Prostate gland (tissue), 2 donors: ENCODE measurements at regions of chr11 and their contacts with region 1.

Region 1: DNA sequence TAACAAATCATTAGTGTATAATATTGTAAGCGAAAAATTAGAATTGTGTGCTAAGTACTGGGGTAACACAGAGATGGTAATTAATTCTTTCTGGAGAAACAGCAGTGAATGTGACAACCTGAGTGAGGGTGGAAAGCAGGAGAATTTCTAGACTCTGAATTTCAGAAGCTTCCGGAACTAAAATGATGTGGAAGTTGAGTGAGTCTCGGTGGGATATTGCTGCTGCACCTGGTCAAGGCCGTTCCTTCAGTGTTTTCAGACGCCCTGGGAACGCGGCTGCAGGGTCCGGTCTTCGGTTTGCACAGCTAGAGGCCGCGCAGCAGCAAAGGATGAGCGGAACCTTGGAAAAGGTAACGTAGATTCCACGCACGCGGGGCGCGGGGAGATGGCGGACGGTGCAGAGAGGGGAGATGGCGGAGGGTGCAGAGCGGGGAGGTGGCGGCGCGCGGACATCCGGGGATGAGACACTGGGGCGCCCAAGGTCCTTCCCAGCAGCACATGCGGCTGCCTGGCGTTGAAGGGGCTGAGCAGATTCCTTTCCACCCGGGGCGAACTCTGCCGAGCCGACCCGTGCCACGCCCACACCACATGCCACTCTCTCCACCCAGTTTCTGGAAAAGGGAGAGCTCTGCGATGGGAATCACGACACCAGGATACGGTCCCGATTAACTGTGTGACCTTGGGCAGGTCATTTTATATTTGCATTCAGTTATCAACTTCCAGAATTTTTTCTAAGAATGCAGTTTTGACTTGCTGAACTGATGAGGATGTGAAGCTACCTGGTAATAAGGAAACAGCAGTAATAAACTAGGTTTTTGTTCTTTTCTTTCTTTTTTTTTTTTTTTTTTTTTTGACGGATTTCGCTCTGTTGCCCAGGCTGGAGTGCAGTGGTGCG is at the start of gene MRPL48:
- DNase-seq: peak; percentile 83
- H3K4me3 ChIP-seq: peak within 1 kb of the TSS; percentile 61 to 68
- H3K27ac ChIP-seq: peak within 1 kb of the TSS; percentile 82 to 83
- H3K4me1 ChIP-seq: no peaks in the 10 kb centered on the region
- H3K27me3 ChIP-seq: no peaks in the 10 kb centered on the region
- CTCF ChIP-seq: peak in 1 of 4 experiments; percentile 20
- POLR2A ChIP-seq: peak; percentile 27
- total RNA-seq, gene MRPL48: 11.1 to 33.0 TPM

Region 2: GRCh38 chr11:73876424-73877300 is 88.8 kb after region 1 on chr11 and contains the starts of genes COA4 and PAAF1:
- intact Hi-C with region 1: loop called (anchors 10 kb)
- DNase-seq: peak; percentile 93
- H3K4me3 ChIP-seq: peak within 1 kb of the TSS; percentile 61 to 84
- H3K27ac ChIP-seq: peak within 1 kb of the TSS; percentile 78 to 85
- H3K4me1 ChIP-seq: no peaks in the 10 kb centered on the region
- H3K27me3 ChIP-seq: no peaks in the 10 kb centered on the region
- CTCF ChIP-seq: peak in 2 of 4 experiments; percentile 2 to 25
- POLR2A ChIP-seq: peak; percentile 43
- total RNA-seq, gene COA4: 57.0 to 136 TPM
- total RNA-seq, gene PAAF1: 15.6 to 28.3 TPM

Region 3: GRCh38 chr11:73907191-73907590 is 119.3 kb after region 1 on chr11:
- intact Hi-C with region 1: no loop called
- DNase-seq: no peak
- H3K4me3 ChIP-seq: no peak overlapping the region
- H3K27ac ChIP-seq: no peak overlapping the region
- H3K4me1 ChIP-seq: no peaks in the 10 kb centered on the region
- H3K27me3 ChIP-seq: no peaks in the 10 kb centered on the region
- CTCF ChIP-seq: no peak
- POLR2A ChIP-seq: no peak